B cell (primary cell): ENCODE measurements at regions of chr16 and their contacts with region 1.

Region 1: DNA sequence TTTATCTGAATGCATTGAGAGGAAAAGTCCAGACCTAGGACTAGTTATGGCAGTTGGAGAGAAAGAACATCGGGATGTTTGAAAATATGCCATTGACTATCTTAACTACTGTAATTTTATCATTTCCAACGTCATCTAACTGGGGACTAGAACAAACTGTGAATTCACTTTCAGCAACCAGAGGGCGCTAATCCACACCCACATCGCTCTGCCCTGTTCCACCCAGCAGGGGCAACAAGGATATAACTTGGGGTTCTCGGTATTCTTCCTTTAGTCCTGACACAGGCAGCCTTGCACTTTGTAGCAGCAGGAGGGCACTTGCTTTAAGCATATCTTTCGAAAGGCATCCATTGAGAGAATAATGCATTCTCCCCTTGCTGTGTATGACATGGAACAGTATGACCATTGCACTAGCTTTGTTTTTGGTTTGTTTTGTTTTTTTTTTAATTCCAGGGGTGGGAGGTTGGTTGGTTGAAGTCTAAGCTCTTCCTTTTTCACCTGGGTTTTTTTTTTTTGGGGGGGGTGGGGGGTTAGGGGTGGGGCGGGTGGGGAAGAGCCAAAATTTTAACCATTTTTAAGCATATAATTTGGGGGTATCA is 31.5 kb downstream of the SIAH1 start:
- DNase-seq: peak; percentile 84
- ATAC-seq: peak; percentile 94
- H3K4me3 ChIP-seq: no peak overlapping the region
- H3K4me3 Mint-ChIP-seq: no peak overlapping the region
- H3K27ac ChIP-seq: no peak overlapping the region
- H3K27ac Mint-ChIP-seq: peak overlapping the region; percentile 57
- H3K4me1 ChIP-seq: peaks cover 4 to 5% of the 10 kb centered on the region in 2 donors
- H3K4me1 Mint-ChIP-seq: peaks cover 28% of the 10 kb centered on the region
- H3K27me3 ChIP-seq: no peaks in the 10 kb centered on the region
- H3K27me3 Mint-ChIP-seq: no peaks in the 10 kb centered on the region
- CTCF ChIP-seq: peak; percentile 85

Region 2: GRCh38 chr16:48365581-48366164 is 12.0 kb after region 1 on chr16:
- CTCF ChIA-PET with region 1: interaction called, 31 read pairs
- POLR2A ChIA-PET with region 1: no interaction called
- intact Hi-C with region 1: loop called (anchors 1 kb)
- DNase-seq: peak; percentile 78
- ATAC-seq: peak; percentile 96
- H3K4me3 ChIP-seq: peak overlapping the region; percentile 58 to 96 (median 79)
- H3K4me3 Mint-ChIP-seq: peak overlapping the region; percentile 90
- H3K27ac ChIP-seq: peak overlapping the region; percentile 80 to 92
- H3K27ac Mint-ChIP-seq: peak overlapping the region; percentile 83
- H3K4me1 ChIP-seq: peaks cover 22 to 24% of the 10 kb centered on the region in 2 donors
- H3K4me1 Mint-ChIP-seq: peaks cover 60% of the 10 kb centered on the region
- H3K27me3 ChIP-seq: no peaks in the 10 kb centered on the region
- H3K27me3 Mint-ChIP-seq: no peaks in the 10 kb centered on the region
- CTCF ChIP-seq: no peak

Region 3: GRCh38 chr16:48394826-48395774 is 41.4 kb after region 1 on chr16:
- CTCF ChIA-PET with region 1: no interaction called
- POLR2A ChIA-PET with region 1: no interaction called
- intact Hi-C with region 1: no loop called
- DNase-seq: no peak
- ATAC-seq: no peak
- H3K4me3 ChIP-seq: no peak overlapping the region
- H3K4me3 Mint-ChIP-seq: no peak overlapping the region
- H3K27ac ChIP-seq: no peak overlapping the region
- H3K27ac Mint-ChIP-seq: no peak overlapping the region
- H3K4me1 ChIP-seq: no peaks in the 10 kb centered on the region
- H3K4me1 Mint-ChIP-seq: peaks cover 3% of the 10 kb centered on the region
- H3K27me3 ChIP-seq: no peaks in the 10 kb centered on the region
- H3K27me3 Mint-ChIP-seq: no peaks in the 10 kb centered on the region
- CTCF ChIP-seq: no peak

Region 4: DNA sequence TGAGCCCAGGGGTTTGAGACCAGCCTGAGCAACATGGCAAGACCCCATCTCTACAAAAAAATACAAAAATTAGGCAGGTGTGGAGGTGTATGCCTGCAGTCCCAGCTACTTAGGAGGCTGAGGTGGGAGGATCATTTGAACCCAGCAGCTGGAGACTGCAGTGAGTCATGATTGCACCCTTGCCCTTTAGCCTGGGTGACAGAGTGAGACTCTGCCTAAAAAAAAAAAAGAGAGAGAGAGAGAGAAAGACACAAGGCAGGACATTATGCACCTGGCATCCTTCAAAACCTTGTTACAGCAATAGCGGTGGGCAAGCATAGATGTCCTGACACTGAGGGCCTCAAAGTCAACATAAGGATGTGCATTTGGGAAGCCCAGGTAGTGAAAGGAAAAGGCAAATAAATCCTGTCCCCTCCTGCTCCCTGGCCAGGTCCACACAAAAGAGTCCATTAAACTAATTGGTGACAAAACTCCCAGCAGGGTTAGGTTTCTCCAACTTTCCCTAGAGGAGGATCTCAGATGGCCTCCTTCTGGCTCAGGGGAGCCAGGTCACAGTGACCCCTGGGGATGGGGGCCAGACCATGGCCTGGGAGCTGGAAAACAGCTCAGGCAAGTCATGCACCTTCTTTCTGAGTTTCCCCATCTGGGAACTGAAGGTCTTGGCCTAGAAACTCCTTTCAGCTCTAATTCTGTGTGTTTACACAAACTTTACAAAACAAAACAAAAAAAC is 51.7 kb after region 1 on chr16:
- CTCF ChIA-PET with region 1: no interaction called
- POLR2A ChIA-PET with region 1: no interaction called
- intact Hi-C with region 1: no loop called
- DNase-seq: no peak
- ATAC-seq: no peak
- H3K4me3 ChIP-seq: no peak overlapping the region
- H3K4me3 Mint-ChIP-seq: no peak overlapping the region
- H3K27ac ChIP-seq: no peak overlapping the region
- H3K27ac Mint-ChIP-seq: no peak overlapping the region
- H3K4me1 ChIP-seq: no peaks in the 10 kb centered on the region
- H3K4me1 Mint-ChIP-seq: no peaks in the 10 kb centered on the region
- H3K27me3 ChIP-seq: no peaks in the 10 kb centered on the region
- H3K27me3 Mint-ChIP-seq: no peaks in the 10 kb centered on the region
- CTCF ChIP-seq: no peak

Region 5: DNA sequence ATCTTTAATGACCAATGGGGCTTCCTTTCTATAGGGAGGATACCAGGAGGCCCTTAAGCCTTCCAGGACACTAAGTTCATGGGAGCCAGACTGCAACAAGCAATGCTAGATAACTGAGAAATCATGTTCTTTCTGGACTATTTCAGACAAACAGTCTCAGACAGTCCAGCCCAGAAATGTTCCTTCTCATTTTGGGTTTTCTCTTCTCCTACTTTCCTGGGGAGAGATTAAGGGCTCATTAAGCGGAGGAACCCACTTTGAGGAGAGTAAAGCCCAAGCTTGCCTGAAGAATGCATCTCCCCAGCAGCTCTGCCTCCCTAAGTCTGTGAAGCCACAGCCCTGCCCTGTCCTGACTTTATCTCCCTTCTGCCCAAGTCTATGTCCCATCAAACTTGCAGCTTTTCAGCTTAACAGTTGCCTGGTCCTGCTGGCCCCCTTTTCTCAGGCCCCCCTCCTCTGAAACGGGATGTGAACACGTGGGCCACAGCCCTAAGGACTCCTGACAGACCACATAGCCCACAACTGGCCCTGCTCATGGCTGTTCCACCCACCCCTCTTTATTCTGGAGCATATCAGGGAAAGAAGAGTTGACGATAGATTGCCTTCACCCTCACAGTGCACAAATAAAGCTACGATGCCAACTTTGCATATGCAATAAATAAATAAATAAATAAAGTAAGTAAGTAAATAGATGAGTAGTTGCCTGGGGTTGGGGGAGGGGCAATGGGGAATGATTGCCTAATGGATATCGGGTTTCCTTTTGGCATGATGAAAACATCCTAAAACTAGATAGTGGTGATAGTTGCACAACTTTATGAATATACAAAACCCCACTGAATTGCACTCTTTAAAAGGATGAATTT is 145.3 kb after region 1 on chr16:
- CTCF ChIA-PET with region 1: interaction called, 5 read pairs
- POLR2A ChIA-PET with region 1: no interaction called
- intact Hi-C with region 1: loop called (anchors 1 kb)
- DNase-seq: no peak
- ATAC-seq: no peak
- H3K4me3 ChIP-seq: no peak overlapping the region
- H3K4me3 Mint-ChIP-seq: no peak overlapping the region
- H3K27ac ChIP-seq: no peak overlapping the region
- H3K27ac Mint-ChIP-seq: no peak overlapping the region
- H3K4me1 ChIP-seq: peaks cover 0 to 4% of the 10 kb centered on the region in 2 donors
- H3K4me1 Mint-ChIP-seq: peaks cover 9% of the 10 kb centered on the region
- H3K27me3 ChIP-seq: no peaks in the 10 kb centered on the region
- H3K27me3 Mint-ChIP-seq: no peaks in the 10 kb centered on the region
- CTCF ChIP-seq: no peak

Region 6: DNA sequence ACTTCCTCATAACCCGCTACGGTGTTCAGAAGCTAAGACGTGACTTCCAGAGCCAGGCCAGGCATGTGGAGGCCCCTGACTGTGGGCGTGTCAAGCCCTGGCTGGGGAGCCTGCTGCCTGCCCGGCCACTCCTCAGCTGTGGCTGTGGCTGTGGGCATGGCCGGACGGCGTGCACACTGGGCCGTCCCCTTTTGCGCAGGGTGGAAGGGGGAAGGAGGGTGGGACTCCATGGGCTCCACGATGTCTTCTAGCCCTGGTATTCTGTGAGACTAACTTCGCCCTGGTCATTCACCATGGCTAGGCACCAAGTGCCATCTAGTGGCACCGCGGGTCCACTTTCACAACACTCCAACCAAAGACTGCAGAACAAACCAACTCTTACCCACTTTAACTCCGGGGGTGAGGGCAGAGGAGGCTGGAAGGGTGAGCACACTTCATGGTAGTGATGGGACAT is 188.4 kb after region 1 on chr16:
- CTCF ChIA-PET with region 1: interaction called, 76 read pairs
- POLR2A ChIA-PET with region 1: no interaction called
- intact Hi-C with region 1: loop called (anchors 1 kb)
- DNase-seq: peak; percentile 62
- ATAC-seq: peak; percentile 70
- H3K4me3 ChIP-seq: no peak overlapping the region
- H3K4me3 Mint-ChIP-seq: no peak overlapping the region
- H3K27ac ChIP-seq: no peak overlapping the region
- H3K27ac Mint-ChIP-seq: peak overlapping the region; percentile 32
- H3K4me1 ChIP-seq: peaks cover 5 to 6% of the 10 kb centered on the region in 2 donors
- H3K4me1 Mint-ChIP-seq: peaks cover 6% of the 10 kb centered on the region
- H3K27me3 ChIP-seq: no peaks in the 10 kb centered on the region
- H3K27me3 Mint-ChIP-seq: no peaks in the 10 kb centered on the region
- CTCF ChIP-seq: peak; percentile 73

Region 7: DNA sequence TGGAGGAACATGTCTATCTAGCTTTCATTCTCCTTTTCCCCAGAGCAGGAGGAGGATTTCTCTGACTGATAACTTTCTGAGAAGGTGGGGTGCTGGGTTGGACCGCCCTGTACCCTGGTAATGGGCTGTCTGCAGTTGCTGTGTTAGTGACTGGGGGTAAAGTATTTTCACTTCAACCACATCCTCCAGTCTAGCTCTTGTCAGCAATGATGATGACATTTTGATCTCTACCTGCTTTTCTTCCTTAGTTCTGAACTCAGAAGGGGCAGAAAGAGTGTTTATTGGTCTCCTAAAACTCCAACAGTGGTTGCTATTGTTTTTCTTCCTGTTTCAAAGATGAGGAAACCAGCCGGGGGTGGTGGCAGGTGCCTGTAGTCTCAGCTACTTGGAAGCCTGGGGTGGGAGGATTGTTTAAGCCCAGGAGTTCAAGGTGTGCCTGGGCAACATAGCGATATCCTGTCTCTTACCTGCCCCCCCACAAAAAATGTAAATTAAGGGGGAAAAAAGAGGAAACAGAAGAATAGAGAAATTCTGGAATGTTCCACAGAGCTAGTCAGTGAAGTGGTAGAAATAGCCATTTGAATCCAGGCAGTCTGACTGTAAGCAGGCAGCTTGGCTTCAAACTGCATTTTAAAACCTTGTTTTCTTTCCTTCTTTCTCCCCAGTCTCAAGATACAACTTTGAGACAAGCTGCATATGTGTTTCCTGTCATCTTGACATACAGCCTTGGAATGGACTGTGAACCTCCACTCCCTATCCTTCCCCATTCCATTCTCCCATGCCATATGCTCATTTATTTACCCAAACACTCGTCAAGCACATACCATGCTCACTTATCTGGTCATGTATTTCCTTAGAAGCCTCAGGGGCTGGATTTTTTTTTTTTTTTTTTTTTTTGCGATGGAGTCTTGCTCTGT is 259.6 kb after region 1 on chr16:
- CTCF ChIA-PET with region 1: no interaction called
- POLR2A ChIA-PET with region 1: no interaction called
- intact Hi-C with region 1: no loop called
- DNase-seq: peak; percentile 22
- ATAC-seq: no peak
- H3K4me3 ChIP-seq: peak overlapping the region in 1 of 5 experiments; percentile 29
- H3K4me3 Mint-ChIP-seq: peak overlapping the region; percentile 68
- H3K27ac ChIP-seq: peak overlapping the region; percentile 52 to 83
- H3K27ac Mint-ChIP-seq: peak overlapping the region; percentile 82
- H3K4me1 ChIP-seq: peaks cover 38 to 43% of the 10 kb centered on the region in 2 donors
- H3K4me1 Mint-ChIP-seq: peaks cover 34% of the 10 kb centered on the region
- H3K27me3 ChIP-seq: peaks cover 0 to 4% (median 0%) of the 10 kb centered on the region in 4 experiments
- H3K27me3 Mint-ChIP-seq: peaks cover 7% of the 10 kb centered on the region
- CTCF ChIP-seq: no peak

Region 8: DNA sequence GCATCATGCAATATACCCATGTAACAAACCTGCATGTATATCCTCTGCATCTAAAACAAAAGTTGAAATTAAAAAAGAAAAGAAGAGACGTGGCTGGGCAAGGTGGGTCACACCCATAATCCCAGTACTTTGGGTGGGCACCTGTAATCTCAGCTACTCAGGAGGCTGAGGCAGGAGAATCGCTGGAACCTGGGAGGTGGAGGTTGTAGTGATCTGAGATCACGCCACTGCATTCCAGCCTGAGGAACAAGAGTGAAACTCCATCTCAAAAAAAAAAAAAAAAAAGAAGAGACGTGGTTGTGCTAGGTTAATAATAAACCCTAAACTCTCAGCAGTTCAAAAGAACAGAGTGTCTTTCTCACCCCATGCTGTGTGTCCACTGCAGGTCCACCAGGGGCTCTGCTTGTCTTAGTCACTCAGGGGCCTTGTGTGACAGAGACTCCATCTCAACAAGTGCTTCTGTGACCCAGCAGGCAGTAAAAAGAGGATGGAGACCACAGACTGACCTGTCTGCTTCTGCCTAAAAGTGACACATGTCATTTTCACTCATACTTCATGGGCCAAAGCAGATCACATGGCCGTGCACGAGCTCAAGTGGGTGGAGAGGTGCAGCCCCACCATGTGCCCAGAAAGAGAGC is 278.6 kb after region 1 on chr16:
- CTCF ChIA-PET with region 1: interaction called, 18 read pairs
- POLR2A ChIA-PET with region 1: no interaction called
- intact Hi-C with region 1: loop called (anchors 1 kb)
- DNase-seq: no peak
- ATAC-seq: no peak
- H3K4me3 ChIP-seq: no peak overlapping the region
- H3K4me3 Mint-ChIP-seq: no peak overlapping the region
- H3K27ac ChIP-seq: no peak overlapping the region
- H3K27ac Mint-ChIP-seq: no peak overlapping the region
- H3K4me1 ChIP-seq: peaks cover 0 to 7% of the 10 kb centered on the region in 2 donors
- H3K4me1 Mint-ChIP-seq: peaks cover 6% of the 10 kb centered on the region
- H3K27me3 ChIP-seq: no peaks in the 10 kb centered on the region
- H3K27me3 Mint-ChIP-seq: peaks cover 19% of the 10 kb centered on the region
- CTCF ChIP-seq: no peak